ENCODE measurements at regions of chr17 and their contacts with region 1.

Region 1: GRCh38 chr17:74203439-74204240 is at the start of gene RPL38:
- DNase-seq: peak; percentile 95 to 100
- H3K4me3 ChIP-seq: peak within 1 kb of the TSS; percentile 70 to 99 (median 96)
- H3K27ac ChIP-seq: peak within 1 kb of the TSS; percentile 92
- H3K4me1 ChIP-seq: peaks cover 7 to 24% (median 11%) of the 10 kb centered on the region in 4 experiments
- H3K27me3 ChIP-seq: peaks cover 0 to 13% (median 8%) of the 10 kb centered on the region in 4 experiments; a peak in 4 of 7 replicates
- CTCF ChIP-seq: peak; percentile 79 to 99 (median 98)
- EP300 ChIP-seq: peak in 1 of 2 experiments; percentile 87; a peak in 1 of 3 replicates
- POLR2A ChIP-seq: peak in 1 of 2 experiments; percentile 98; a peak in 2 of 3 replicates
- RAD21 ChIP-seq: peak in 1 of 2 experiments; percentile 18; a peak in 2 of 4 replicates
- total RNA-seq, gene RPL38: 1,195 and 1,222 TPM in 2 replicates

Region 2: GRCh38 chr17:74140282-74140681 is 63.4 kb before region 1 on chr17:
- CTCF ChIA-PET with region 1: no interaction called
- POLR2A ChIA-PET with region 1: no interaction called
- DNase-seq: no peak
- H3K4me3 ChIP-seq: no peak overlapping the region
- H3K27ac ChIP-seq: no peak overlapping the region
- H3K4me1 ChIP-seq: no peaks in the 10 kb centered on the region
- H3K27me3 ChIP-seq: no peaks in the 10 kb centered on the region
- CTCF ChIP-seq: no peak
- EP300 ChIP-seq: no peak
- POLR2A ChIP-seq: no peak
- RAD21 ChIP-seq: no peak

Region 3: GRCh38 chr17:74182041-74182723 is 21.5 kb before region 1 on chr17:
- CTCF ChIA-PET with region 1: interaction called, 22 read pairs
- POLR2A ChIA-PET with region 1: interaction called, 14 read pairs
- DNase-seq: no peak
- H3K4me3 ChIP-seq: no peak overlapping the region
- H3K27ac ChIP-seq: no peak overlapping the region
- H3K4me1 ChIP-seq: 0 out of 7 replicates have a peak, but pooled peaks cover 0 to 4% (median 0%) of the 10 kb centered on the region in 4 experiments
- H3K27me3 ChIP-seq: no peaks in the 10 kb centered on the region
- CTCF ChIP-seq: no peak
- EP300 ChIP-seq: no peak
- POLR2A ChIP-seq: no peak
- RAD21 ChIP-seq: no peak

Region 4: DNA sequence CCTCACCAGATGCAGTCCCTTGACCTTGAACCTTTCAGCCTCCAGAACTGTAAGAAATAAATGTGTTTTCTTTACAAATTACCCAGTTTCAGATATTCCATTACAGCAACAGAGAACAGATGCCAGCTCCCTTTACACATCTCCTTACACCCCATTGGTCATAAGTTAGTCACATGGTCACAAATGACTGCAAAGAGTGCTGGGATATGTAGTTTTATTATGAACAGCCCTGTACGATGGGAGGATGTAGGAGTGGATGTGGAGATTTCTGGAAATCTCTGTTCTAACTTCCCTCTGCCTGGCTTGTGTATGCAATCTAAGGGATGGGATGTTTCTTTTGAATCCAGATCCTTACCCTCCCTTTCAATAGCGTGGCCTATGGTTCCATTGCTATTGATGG is 13.5 kb before region 1 on chr17:
- CTCF ChIA-PET with region 1: interaction called, 19 read pairs
- POLR2A ChIA-PET with region 1: interaction called, 55 read pairs
- DNase-seq: no peak
- H3K4me3 ChIP-seq: no peak overlapping the region
- H3K27ac ChIP-seq: no peak overlapping the region
- H3K4me1 ChIP-seq: peaks cover 0 to 4% (median 0%) of the 10 kb centered on the region in 4 experiments; a peak in 1 of 7 replicates
- H3K27me3 ChIP-seq: no peaks in the 10 kb centered on the region
- CTCF ChIP-seq: no peak
- EP300 ChIP-seq: no peak
- POLR2A ChIP-seq: no peak
- RAD21 ChIP-seq: no peak

Region 5: DNA sequence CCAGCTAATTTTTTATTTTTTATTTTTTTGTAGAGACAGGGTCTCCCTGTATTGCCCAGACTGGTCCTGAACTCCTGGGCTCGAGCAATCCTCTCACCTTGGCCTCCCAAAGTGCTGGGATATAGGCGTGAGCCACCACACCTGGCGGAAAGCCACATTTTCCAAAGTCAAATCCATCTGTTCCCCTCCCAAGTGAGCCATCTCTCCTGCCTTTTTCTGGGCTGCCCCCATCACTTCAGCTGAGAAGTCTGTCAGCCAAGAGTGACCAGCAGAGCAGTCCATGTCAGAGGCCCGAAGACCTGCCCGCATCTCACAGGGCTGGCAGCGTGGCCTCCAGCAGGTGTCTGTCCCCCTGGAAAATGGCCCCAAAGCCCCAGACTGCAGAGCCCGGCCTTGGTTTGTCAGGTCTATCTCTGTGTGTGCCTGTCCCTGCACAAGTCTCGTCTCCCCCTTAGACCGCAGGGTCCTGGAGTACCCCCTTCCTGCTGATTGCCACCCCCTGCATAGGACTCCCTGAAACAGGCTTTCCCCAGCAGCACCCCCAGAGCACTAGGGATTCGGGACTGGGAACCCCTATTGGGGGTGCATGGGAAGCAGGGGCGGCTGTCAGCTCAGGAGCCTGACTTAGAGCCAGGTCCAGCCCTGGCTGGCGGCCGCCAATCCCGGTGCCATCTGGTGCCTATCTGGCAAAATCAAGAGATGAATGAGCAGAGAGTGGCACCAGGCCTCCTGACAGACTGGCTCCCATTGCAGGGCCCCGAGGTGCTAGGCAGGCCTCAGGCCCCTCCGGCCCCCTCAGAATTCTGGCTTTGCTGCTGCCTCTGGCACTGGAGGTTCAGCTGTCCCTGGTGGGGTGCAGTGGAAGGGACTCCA is 17.5 kb after region 1 on chr17:
- CTCF ChIA-PET with region 1: interaction called, 7 read pairs
- POLR2A ChIA-PET with region 1: interaction called, 19 read pairs
- DNase-seq: no peak
- H3K4me3 ChIP-seq: no peak overlapping the region
- H3K27ac ChIP-seq: no peak overlapping the region
- H3K4me1 ChIP-seq: no peaks in the 10 kb centered on the region; a peak in 1 of 7 replicates
- H3K27me3 ChIP-seq: no peaks in the 10 kb centered on the region
- CTCF ChIP-seq: no peak
- EP300 ChIP-seq: no peak
- POLR2A ChIP-seq: no peak
- RAD21 ChIP-seq: no peak

Region 6: DNA sequence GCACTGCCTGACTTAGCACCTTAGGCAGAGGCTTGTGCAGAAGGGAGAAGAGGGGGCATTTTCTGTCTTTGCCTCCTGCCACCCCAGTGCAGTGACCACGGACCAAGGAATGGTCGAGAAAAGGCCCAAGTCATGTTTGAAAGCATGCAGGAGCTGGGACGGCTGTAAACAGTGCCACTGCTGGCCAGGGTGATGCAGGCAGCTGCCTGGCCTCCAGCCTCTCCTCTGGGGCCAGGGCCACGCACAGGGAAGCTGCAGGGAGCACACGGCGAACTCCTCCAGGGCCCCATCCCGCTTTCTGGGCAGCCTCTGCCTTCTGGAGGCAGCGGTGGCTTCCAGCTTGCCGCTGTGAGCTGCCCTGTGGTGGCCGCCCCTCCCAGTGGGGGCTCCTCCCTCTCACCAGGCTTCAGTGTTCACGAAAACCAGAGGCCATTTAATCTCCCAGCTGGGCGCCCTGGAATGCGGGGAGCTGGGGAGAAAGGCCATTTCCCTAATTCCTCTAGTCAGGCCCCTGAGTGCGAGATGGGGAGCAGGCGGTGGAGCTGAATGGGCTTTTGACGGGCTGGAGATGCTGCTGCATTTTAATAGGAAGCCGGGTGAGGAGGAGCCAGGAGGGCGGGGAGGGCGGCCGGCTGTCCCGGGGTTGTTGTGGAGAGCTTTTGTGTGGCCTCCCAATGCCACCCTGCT is 41.6 kb after region 1 on chr17:
- CTCF ChIA-PET with region 1: interaction called, 3 read pairs
- POLR2A ChIA-PET with region 1: interaction called, 61 read pairs
- DNase-seq: peak; percentile 47 to 73
- H3K4me3 ChIP-seq: peak overlapping the region in 1 of 4 experiments; percentile 13; a peak in 3 of 8 replicates
- H3K27ac ChIP-seq: no peak overlapping the region
- H3K4me1 ChIP-seq: peaks cover 8 to 19% (median 15%) of the 10 kb centered on the region in 4 experiments
- H3K27me3 ChIP-seq: no peaks in the 10 kb centered on the region
- CTCF ChIP-seq: peak; percentile 16 to 32 (median 24); a peak in 3 of 4 replicates
- EP300 ChIP-seq: 0 out of 3 replicates have a peak, but pooled peaks of 1 of the 2 experiments have one; percentile 48
- POLR2A ChIP-seq: no peak
- RAD21 ChIP-seq: no peak

Region 7: DNA sequence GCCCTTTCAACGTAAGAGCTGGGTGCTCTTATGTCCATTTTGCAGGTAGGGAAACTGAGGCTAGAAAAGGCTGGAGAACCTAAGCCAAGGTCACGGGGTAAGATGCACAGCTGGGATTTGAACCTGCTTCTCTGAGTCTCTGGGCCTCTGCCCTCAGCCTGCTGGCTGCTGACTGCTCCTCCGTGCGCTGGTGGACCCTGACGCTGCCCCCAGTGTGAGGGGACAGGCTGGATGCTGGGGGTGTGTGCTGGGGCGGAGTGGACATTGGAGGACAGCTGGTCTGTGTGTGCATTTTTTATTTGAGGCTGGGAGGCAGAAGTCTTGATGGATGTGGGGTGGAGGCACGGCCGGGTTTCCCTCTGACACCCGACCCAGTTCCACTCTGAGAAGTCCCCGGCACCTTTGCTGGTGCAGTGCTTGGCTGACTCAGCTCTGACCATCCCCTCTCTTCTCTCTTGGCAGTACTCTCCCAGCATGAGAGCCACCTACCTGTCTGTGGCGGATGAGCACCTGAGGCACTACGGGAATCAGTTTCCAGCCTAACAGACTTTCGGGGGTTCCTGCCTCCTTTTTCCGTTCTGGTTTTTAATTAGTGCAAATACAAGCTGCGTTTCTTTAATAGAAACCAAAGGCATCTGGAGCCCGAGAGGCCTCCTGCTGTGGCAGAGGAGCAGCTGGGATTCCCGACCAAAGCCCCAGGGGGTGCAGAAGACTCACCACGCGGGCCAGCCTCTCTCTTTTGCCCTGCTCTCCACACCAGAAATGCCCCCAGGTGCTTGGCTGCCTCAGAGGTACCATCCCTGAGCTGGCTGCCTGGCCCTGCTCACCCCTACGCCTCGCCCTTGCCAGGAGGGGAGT is 56.3 kb after region 1 on chr17:
- CTCF ChIA-PET with region 1: interaction called, 3 read pairs
- POLR2A ChIA-PET with region 1: interaction called, 12 read pairs
- DNase-seq: peak in 1 of 2 experiments; percentile 56
- H3K4me3 ChIP-seq: peak overlapping the region in 2 of 4 experiments; percentile 2 to 25; a peak in 1 of 8 replicates
- H3K27ac ChIP-seq: no peak overlapping the region
- H3K4me1 ChIP-seq: peaks cover 0 to 21% (median 13%) of the 10 kb centered on the region in 4 experiments; a peak in 6 of 7 replicates
- H3K27me3 ChIP-seq: no peaks in the 10 kb centered on the region
- CTCF ChIP-seq: peak in 2 of 3 experiments; percentile 28 to 34; a peak in 3 of 4 replicates
- EP300 ChIP-seq: no peak
- POLR2A ChIP-seq: no peak
- RAD21 ChIP-seq: peak in 1 of 2 experiments; percentile 34; a peak in 1 of 4 replicates

Region 8: DNA sequence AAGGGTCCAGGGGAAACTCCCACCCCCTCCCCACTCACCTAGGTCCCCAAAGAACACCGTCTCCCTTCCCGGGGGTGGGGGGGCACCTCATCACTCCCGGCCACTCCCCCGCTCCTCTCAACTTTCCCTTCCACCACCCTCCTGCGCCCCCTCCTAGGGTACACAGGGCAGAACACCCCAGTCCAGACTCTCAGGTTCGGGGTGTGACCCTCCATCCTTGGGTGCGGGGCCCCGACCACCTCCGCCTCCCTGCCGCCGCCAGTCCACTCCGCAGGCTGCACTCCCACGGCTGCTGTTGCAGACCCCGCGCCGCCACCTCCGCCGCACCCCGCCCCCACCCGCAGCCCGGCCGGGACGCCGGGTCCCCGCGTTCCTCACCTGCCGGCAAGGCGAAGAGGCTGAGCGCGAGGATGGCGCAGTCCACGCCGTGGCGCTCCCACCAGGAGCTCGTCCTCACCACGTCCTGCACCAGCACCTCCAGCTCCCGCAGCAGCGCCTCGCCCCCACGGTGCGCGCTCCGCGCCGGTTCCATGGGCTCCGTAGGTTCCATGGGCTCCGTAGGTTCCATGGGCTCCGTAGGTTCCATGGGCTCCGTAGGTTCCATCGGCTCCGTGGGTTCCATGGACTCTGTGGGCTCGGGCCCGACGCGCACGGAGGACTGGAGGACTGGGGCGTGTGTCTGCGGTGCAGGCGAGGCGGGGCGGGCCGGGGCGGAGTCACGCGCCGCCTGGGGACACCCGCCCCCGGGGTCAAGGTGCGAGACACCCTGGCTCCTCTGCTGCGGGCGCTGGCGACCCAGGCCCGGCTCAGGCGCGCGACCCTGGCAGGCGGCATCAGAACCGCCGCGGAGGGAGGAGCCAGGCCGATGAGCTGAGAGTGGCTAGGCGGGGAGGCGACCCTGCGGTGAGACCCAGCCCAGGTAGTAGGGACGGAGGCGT is 689.6 kb after region 1 on chr17 and contains the start of gene FADS6:
- CTCF ChIA-PET with region 1: no interaction called
- POLR2A ChIA-PET with region 1: no interaction called
- DNase-seq: no peak
- H3K4me3 ChIP-seq: peak within 1 kb of the TSS; percentile 61 to 75 (median 64)
- H3K27ac ChIP-seq: no peak within 1 kb of the TSS
- H3K4me1 ChIP-seq: peaks cover 0 to 10% (median 4%) of the 10 kb centered on the region in 4 experiments; a peak in 4 of 7 replicates
- H3K27me3 ChIP-seq: peaks cover 16 to 43% (median 37%) of the 10 kb centered on the region in 4 experiments; a peak in 6 of 7 replicates
- CTCF ChIP-seq: no peak
- EP300 ChIP-seq: no peak
- POLR2A ChIP-seq: no peak
- RAD21 ChIP-seq: no peak
- total RNA-seq, gene FADS6: 0.56 and 0.80 TPM in 2 replicates